CD4-positive, alpha-beta T cell (primary cell): ENCODE measurements at regions of chr11 and their contacts with region 1.

Region 1: GRCh38 chr11:57335343-57336110 is at the start of gene SSRP1:
- DNase-seq: peak; percentile 77 to 95 (median 86)
- ATAC-seq: peak; percentile 97
- H3K4me3 ChIP-seq: peak within 1 kb of the TSS; percentile 80
- H3K4me3 Mint-ChIP-seq: peak within 1 kb of the TSS; percentile 89
- H3K27ac ChIP-seq: peak within 1 kb of the TSS; percentile 72 to 85
- H3K27ac Mint-ChIP-seq: peak within 1 kb of the TSS; percentile 96
- H3K4me1 ChIP-seq: peaks cover 29% of the 10 kb centered on the region
- H3K4me1 Mint-ChIP-seq: peaks cover 33% of the 10 kb centered on the region
- H3K27me3 ChIP-seq: no peaks in the 10 kb centered on the region
- H3K27me3 Mint-ChIP-seq: no peaks in the 10 kb centered on the region
- CTCF ChIP-seq: no peak
- total RNA-seq, gene SSRP1: 36.7 to 41.2 TPM

Region 2: GRCh38 chr11:57294605-57295131 is 40.9 kb before region 1 on chr11:
- CTCF ChIA-PET with region 1: no interaction called
- POLR2A ChIA-PET with region 1: no interaction called
- intact Hi-C with region 1: no loop called
- DNase-seq: no peak
- ATAC-seq: no peak
- H3K4me3 ChIP-seq: no peak overlapping the region
- H3K4me3 Mint-ChIP-seq: no peak overlapping the region
- H3K27ac ChIP-seq: no peak overlapping the region
- H3K27ac Mint-ChIP-seq: no peak overlapping the region
- H3K4me1 ChIP-seq: no peaks in the 10 kb centered on the region
- H3K4me1 Mint-ChIP-seq: no peaks in the 10 kb centered on the region
- H3K27me3 ChIP-seq: no peaks in the 10 kb centered on the region
- H3K27me3 Mint-ChIP-seq: peaks cover 17% of the 10 kb centered on the region
- CTCF ChIP-seq: no peak

Region 3: DNA sequence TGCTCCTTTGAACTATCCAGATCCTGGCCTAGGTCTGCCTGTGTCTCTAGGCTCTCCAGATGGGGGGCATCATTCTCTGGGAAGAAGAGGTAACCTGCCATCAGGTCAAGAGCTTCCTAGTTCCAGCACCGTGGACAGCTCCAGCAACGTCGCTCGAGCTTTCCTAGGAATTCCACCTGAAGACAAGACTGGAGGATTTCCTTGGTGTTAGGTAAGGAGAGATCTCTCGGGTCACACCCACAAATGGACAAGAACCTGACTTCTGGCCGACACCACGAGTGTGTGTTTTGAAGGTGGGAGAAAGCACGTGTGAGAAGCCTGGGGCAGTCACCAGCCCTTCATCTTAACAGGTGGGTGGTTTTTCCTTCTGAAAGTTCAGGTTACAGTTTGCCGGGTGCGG is 44.2 kb after region 1 on chr11:
- CTCF ChIA-PET with region 1: no interaction called
- POLR2A ChIA-PET with region 1: no interaction called
- intact Hi-C with region 1: no loop called
- DNase-seq: no peak
- ATAC-seq: no peak
- H3K4me3 ChIP-seq: no peak overlapping the region
- H3K4me3 Mint-ChIP-seq: no peak overlapping the region
- H3K27ac ChIP-seq: no peak overlapping the region
- H3K27ac Mint-ChIP-seq: no peak overlapping the region
- H3K4me1 ChIP-seq: no peaks in the 10 kb centered on the region
- H3K4me1 Mint-ChIP-seq: no peaks in the 10 kb centered on the region
- H3K27me3 ChIP-seq: no peaks in the 10 kb centered on the region
- H3K27me3 Mint-ChIP-seq: peaks cover 33% of the 10 kb centered on the region
- CTCF ChIP-seq: no peak

Region 4: GRCh38 chr11:57426929-57427726 is 91.6 kb after region 1 on chr11 and contains the start of gene SLC43A3:
- CTCF ChIA-PET with region 1: no interaction called
- POLR2A ChIA-PET with region 1: no interaction called
- intact Hi-C with region 1: loop called in 1 of 2 experiments (anchors 5 kb)
- DNase-seq: peak; percentile 17 to 79 (median 56)
- ATAC-seq: peak; percentile 21
- H3K4me3 ChIP-seq: peak within 1 kb of the TSS; percentile 61
- H3K4me3 Mint-ChIP-seq: peak within 1 kb of the TSS; percentile 87
- H3K27ac ChIP-seq: peak within 1 kb of the TSS; percentile 32 to 58
- H3K27ac Mint-ChIP-seq: peak within 1 kb of the TSS; percentile 87
- H3K4me1 ChIP-seq: peaks cover 39% of the 10 kb centered on the region
- H3K4me1 Mint-ChIP-seq: peaks cover 55% of the 10 kb centered on the region
- H3K27me3 ChIP-seq: no peaks in the 10 kb centered on the region
- H3K27me3 Mint-ChIP-seq: no peaks in the 10 kb centered on the region
- CTCF ChIP-seq: no peak
- total RNA-seq, gene SLC43A3: 6.9 to 7.3 TPM

Region 5: DNA sequence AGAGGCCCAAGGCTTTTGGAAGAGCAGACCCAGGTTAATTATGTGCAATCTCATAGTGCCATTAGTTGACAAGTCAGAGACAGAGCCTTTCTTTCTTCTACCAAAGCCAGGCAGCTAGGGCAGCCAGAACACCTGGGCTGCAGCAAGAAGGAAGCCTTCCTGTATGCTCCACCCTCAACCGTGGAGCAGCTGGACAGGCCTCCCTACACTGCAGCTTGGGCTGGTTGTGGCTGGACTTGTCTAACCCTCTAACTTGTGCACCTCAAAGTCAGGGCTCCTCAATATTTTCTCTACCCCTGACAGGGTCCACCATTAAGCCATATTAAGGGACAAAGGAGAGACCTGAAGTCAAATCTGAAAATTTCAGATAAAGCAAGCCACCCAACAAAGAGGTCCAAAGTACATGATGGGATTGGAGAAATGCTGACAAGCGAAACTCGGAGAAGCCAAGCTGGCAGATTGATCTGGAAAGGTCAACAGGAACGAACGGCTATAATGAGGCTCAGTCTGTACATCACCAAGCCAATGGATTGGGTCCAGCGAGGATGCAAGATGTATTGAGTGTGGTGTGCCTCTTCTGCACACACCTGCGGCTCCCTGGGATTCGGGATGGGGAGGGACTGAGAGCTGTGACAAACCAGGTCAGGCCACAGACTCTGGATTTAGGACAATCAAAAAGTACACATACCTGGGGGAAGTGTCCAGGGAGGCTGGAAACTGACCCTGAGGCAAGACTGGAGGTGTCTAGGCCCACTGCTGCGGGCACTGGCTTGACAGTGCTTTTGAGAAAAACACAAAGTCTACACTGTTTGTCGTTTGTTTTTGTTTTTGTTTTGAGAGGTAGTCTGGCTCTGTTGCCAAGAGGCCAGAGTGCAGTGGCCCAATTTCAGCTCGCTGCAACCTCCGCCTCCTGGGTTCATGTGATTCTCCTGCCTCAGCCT is 103.1 kb after region 1 on chr11:
- CTCF ChIA-PET with region 1: no interaction called
- POLR2A ChIA-PET with region 1: no interaction called
- intact Hi-C with region 1: no loop called
- DNase-seq: no peak
- ATAC-seq: no peak
- H3K4me3 ChIP-seq: no peak overlapping the region
- H3K4me3 Mint-ChIP-seq: no peak overlapping the region
- H3K27ac ChIP-seq: no peak overlapping the region
- H3K27ac Mint-ChIP-seq: no peak overlapping the region
- H3K4me1 ChIP-seq: no peaks in the 10 kb centered on the region
- H3K4me1 Mint-ChIP-seq: no peaks in the 10 kb centered on the region
- H3K27me3 ChIP-seq: no peaks in the 10 kb centered on the region
- H3K27me3 Mint-ChIP-seq: no peaks in the 10 kb centered on the region
- CTCF ChIP-seq: no peak

Region 6: DNA sequence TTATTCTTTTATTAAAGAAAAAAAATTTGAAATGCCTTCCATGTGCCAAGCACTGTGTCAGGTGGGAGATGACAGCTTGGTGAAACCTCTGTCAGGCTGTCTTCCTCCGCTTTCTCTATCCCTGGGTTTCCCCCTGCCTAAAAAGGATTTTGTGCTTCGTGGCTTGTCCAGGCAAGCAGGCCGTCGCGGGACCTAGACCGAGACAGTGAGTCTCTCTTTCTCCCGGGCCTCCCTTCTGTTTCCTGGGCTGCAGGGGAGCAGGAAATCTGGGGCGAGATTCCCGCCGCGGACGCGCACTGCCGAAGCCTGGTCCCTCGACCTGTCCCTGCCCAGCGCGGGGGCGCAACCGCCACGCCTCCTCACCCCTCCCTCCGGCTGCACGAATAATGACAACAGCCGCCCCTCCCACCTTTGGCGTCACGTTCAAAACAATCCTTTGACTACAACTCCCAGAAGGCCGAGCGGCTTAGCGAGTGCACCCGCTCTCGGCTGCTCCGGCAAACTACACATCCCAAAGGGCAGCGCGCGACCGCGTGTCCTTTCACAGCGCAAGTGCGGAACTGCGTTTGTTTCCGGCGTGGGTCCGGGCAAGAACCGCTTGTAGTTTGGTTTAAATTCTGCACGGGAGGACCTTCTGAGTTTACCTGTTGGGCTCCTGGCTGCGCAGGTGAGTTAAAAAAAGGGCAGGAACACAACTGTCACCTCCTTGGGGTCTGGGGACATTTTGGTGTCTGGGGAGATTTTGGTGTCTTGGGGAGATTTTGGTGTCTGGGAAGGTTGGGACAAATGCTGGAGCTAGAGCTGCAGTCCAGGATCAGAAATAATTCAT is 321.9 kb after region 1 on chr11 and contains the start of gene CLP1:
- CTCF ChIA-PET with region 1: interaction called, 3 read pairs
- POLR2A ChIA-PET with region 1: no interaction called
- intact Hi-C with region 1: loop called in 1 of 2 experiments (anchors 2 kb)
- DNase-seq: peak; percentile 94 to 100 (median 98)
- ATAC-seq: peak; percentile 95
- H3K4me3 ChIP-seq: peak within 1 kb of the TSS; percentile 93
- H3K4me3 Mint-ChIP-seq: peak within 1 kb of the TSS; percentile 96
- H3K27ac ChIP-seq: peak within 1 kb of the TSS; percentile 92 to 93
- H3K27ac Mint-ChIP-seq: peak within 1 kb of the TSS; percentile 90
- H3K4me1 ChIP-seq: peaks cover 24% of the 10 kb centered on the region
- H3K4me1 Mint-ChIP-seq: peaks cover 24% of the 10 kb centered on the region
- H3K27me3 ChIP-seq: no peaks in the 10 kb centered on the region
- H3K27me3 Mint-ChIP-seq: no peaks in the 10 kb centered on the region
- CTCF ChIP-seq: no peak
- total RNA-seq, gene CLP1: 21.8 to 24.2 TPM